Mammary epithelial cell (primary cell): ENCODE measurements at regions of chr6 and their contacts with region 1.

Region 1: GRCh38 chr6:22664968-22665367 is 95.6 kb downstream of the HDGFL1 start:
- DNase-seq: peak; percentile 57
- H3K4me3 ChIP-seq: no peak overlapping the region
- H3K27ac ChIP-seq: no peak overlapping the region
- H3K4me1 ChIP-seq: no peaks in the 10 kb centered on the region
- H3K27me3 ChIP-seq: no peaks in the 10 kb centered on the region
- CTCF ChIP-seq: no peak

Region 2: DNA sequence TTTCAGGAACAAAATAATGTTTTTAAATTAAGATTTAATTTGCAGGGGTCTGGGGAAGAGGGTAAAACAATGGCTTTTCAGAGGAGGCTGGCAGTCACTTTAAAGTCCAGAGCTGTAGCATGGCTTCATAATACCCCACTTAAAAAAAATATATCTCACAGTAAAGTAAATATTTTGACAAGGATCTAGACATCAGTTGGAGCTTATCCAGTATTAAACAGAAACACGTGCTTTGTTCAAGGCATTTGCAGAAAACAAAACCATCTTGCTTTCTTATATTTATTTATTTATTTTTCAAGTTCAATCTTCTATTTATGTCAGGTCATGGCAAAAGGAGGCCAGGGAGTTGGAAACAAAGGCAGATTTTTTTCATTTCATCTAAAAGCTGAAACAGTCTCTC is 314.9 kb before region 1 on chr6:
- CTCF ChIA-PET with region 1: interaction called, 11 read pairs
- dilution Hi-C with region 1: no loop called
- in situ Hi-C with region 1: no loop called
- intact Hi-C with region 1: no loop called
- DNase-seq: no peak
- H3K4me3 ChIP-seq: no peak overlapping the region
- H3K27ac ChIP-seq: no peak overlapping the region
- H3K4me1 ChIP-seq: no peaks in the 10 kb centered on the region
- H3K27me3 ChIP-seq: no peaks in the 10 kb centered on the region
- CTCF ChIP-seq: no peak

Region 3: DNA sequence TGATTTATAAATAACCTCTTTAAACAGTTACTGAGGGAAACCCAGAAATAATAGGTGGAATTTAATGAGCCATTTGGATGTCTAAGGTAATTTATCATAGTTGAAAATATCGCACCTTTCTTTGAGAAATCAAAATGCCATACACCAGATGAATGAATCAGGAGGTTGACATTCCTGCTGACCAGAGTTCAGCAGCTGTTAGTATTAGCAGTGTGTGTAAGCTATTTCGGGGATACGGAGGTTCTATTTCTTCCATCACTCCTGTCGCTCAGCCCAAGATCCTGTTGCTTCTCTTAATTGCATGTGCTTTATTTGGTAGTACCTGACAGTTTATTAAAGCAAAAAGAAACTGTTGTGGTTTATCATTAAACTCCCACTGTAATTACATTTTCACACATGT is 28.5 kb before region 1 on chr6:
- CTCF ChIA-PET with region 1: no interaction called
- dilution Hi-C with region 1: no loop called
- in situ Hi-C with region 1: no loop called
- intact Hi-C with region 1: no loop called
- DNase-seq: no peak
- H3K4me3 ChIP-seq: no peak overlapping the region
- H3K27ac ChIP-seq: no peak overlapping the region
- H3K4me1 ChIP-seq: no peaks in the 10 kb centered on the region
- H3K27me3 ChIP-seq: no peaks in the 10 kb centered on the region
- CTCF ChIP-seq: no peak